ENCODE measurements at regions of chr12 and their contacts with region 1.

Region 1: GRCh38 chr12:88433997-88434703 is 146.1 kb downstream of the KITLG start:
- DNase-seq: no peak
- H3K4me3 ChIP-seq: no peak overlapping the region
- H3K27ac ChIP-seq: no peak overlapping the region
- H3K4me1 ChIP-seq: no peaks in the 10 kb centered on the region
- H3K27me3 ChIP-seq: no peaks in the 10 kb centered on the region
- CTCF ChIP-seq: no peak

Region 2: GRCh38 chr12:88650715-88651114 is 216.6 kb after region 1 on chr12:
- CTCF ChIA-PET with region 1: no interaction called
- POLR2A ChIA-PET with region 1: interaction called, 10 read pairs
- intact Hi-C with region 1: no loop called
- DNase-seq: no peak
- H3K4me3 ChIP-seq: no peak overlapping the region
- H3K27ac ChIP-seq: no peak overlapping the region
- H3K4me1 ChIP-seq: no peaks in the 10 kb centered on the region
- H3K27me3 ChIP-seq: no peaks in the 10 kb centered on the region
- CTCF ChIP-seq: no peak

Region 3: DNA sequence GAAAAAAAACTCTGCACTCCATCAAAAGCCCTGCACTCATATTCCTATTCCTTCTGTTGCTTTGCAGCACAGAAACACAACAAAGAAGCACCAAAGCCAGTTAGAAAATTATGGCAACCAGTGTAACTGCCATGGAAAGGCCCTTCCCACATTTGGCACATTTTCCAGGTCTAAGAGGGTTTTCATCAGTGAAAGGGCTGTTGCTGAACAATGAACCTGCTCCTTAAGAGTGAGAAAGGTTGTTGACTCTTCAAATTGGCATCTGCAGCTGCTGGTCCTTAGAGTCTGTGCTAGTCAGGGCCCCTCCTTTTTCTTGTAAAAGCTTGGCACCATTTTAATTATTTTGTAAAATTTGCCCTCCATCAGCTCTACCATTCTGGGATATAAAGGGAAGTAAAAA is 524.8 kb after region 1 on chr12:
- CTCF ChIA-PET with region 1: no interaction called
- POLR2A ChIA-PET with region 1: interaction called, 10 read pairs
- intact Hi-C with region 1: no loop called
- DNase-seq: no peak
- H3K4me3 ChIP-seq: no peak overlapping the region
- H3K27ac ChIP-seq: no peak overlapping the region
- H3K4me1 ChIP-seq: no peaks in the 10 kb centered on the region
- H3K27me3 ChIP-seq: no peaks in the 10 kb centered on the region
- CTCF ChIP-seq: no peak

Measured in PC-9 (cell line).